Uterus (tissue), 4 donors: ENCODE measurements at regions of chr1 and their contacts with region 1.

Region 1: DNA sequence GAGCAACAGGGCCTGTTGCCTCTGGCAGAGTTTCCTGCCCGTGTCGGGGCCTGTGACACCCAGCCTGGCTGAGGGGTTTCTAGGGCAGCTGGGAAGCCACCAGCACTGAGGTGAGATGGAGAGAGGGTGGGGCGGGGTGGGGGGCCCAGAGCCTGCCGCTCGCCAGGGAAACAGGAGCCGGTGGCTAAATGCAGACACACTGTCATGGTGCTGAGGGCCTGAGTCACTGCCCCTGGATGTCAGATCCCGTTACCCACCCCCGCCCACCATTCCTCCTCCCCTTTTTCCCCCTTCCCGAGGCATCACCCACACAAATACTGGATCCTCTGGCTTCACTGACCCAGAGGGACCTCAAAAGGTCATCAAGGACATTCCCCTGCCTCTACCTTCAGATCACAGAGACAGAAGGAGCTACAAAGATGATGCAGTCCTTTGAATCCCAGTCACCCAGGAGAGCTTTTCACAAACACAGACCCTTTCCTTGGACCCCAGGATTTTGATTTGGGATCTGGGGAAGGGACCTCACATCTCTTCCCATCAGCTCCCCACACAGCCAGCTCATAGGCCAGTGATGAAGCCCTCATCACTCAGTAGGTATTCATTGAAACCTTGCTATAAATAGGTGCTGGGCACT is 1.9 kb upstream of the HSPB7 start:
- DNase-seq: peak; percentile 43 to 67
- H3K4me3 ChIP-seq: no peak overlapping the region
- H3K27ac ChIP-seq: peak overlapping the region; percentile 97
- H3K4me1 ChIP-seq: peaks cover 14 to 20% of the 10 kb centered on the region in 2 donors
- H3K27me3 ChIP-seq: no peaks in the 10 kb centered on the region
- CTCF ChIP-seq: no peak
- POLR2A ChIP-seq: no peak

Region 2: GRCh38 chr1:16073490-16074119 is 53.8 kb after region 1 on chr1 and contains the start of gene FAM131C:
- intact Hi-C with region 1: loop called (anchors 5 kb)
- DNase-seq: no peak
- H3K4me3 ChIP-seq: peak within 1 kb of the TSS; percentile 25 to 40
- H3K27ac ChIP-seq: peak within 1 kb of the TSS; percentile 12 to 24
- H3K4me1 ChIP-seq: peaks cover 4 to 11% of the 10 kb centered on the region in 2 donors
- H3K27me3 ChIP-seq: no peaks in the 10 kb centered on the region
- CTCF ChIP-seq: peak in 3 of 4 experiments; percentile 51 to 82 (median 77)
- POLR2A ChIP-seq: no peak
- total RNA-seq, gene FAM131C: 0.28 to 0.85 TPM in 2 of 4 donors, not detected in the others